Transverse colon (tissue), 4 donors: ENCODE measurements at regions of chr6 and their contacts with region 1.

Region 1: GRCh38 chr6:42260972-42261371 is 43.3 kb upstream of the MRPS10 start:
- DNase-seq: peak; percentile 28
- H3K4me3 ChIP-seq: no peak overlapping the region
- H3K27ac ChIP-seq: peak overlapping the region; percentile 28 to 57 (median 50)
- H3K4me1 ChIP-seq: peaks cover 0 to 18% (median 3%) of the 10 kb centered on the region in 4 donors
- H3K27me3 ChIP-seq: no peaks in the 10 kb centered on the region
- CTCF ChIP-seq: peak; percentile 37 to 58 (median 54)
- EP300 ChIP-seq: no peak
- POLR2A ChIP-seq: no peak

Region 2: DNA sequence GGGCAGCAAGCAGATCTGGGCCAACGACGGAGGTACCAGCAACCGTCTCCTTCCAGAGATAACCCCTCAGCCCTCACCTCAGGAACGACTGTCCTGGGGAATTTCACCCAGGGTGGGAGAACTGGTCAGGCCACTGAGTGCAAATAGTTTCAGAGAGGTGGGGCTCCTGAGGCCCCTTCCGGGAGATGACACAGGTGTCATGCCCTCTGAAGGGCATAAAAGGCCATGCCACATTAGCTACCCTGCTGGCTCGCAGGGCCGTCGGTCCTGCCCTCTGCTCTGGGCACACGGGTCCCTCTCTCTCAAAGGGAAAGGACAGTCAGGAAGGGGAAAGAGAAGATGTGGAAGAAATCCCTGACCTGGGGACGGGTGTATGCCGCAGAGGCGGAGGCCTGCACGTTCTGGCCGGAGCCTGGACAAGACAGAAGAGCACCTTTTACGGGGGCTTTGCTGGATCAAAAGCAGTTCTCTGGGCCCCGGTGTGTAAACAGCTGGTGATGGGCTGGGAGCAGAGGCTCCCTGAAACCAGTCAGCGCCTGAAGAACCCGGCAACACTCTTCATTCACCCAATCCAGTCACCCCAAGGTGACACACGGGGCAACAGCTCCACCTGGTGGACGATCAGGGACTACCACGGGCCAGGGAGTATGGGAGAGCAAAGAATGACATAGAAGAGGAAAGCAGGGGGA is 217.0 kb before region 1 on chr6:
- in situ Hi-C with region 1: no loop called
- intact Hi-C with region 1: no loop called
- DNase-seq: peak; percentile 92
- H3K4me3 ChIP-seq: peak overlapping the region in 1 of 4 donors; percentile 18
- H3K27ac ChIP-seq: peak overlapping the region; percentile 87 to 94 (median 92)
- H3K4me1 ChIP-seq: peaks cover 25 to 67% (median 60%) of the 10 kb centered on the region in 4 donors
- H3K27me3 ChIP-seq: no peaks in the 10 kb centered on the region
- CTCF ChIP-seq: peak; percentile 93 to 99 (median 97)
- EP300 ChIP-seq: no peak
- POLR2A ChIP-seq: no peak

Region 3: DNA sequence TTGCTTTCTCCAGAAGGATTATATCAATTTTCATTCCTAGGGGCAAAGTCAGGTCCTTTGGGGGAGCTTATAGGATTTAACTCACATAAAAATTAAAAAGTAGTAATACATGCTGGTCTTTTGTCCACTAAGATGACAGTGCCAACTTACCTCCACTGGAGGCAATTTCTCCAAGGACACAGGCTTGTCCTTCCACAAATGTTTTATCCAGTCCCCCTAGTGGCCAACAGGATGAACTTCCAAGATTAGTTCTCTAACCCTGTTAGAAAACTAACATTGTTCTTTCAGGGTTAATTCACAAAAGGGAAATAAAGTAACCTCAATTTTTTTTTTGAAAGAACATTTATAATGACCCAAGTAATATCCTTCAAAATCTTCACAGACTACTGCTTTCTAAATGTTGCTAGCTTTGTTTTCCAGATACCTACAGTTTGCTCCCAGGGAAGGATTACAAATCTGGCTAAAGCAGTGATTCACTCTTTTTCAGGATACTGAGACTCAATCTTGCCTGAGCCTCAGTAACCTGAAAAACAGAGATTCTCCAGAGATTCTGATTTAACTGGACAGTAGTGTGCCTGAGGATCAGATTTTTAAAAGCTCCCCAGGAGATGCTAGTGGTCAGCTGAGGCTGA is 271.2 kb after region 1 on chr6:
- in situ Hi-C with region 1: loop called (anchors 25 kb)
- intact Hi-C with region 1: loop called (anchors 5 kb)
- DNase-seq: no peak
- H3K4me3 ChIP-seq: no peak overlapping the region
- H3K27ac ChIP-seq: no peak overlapping the region
- H3K4me1 ChIP-seq: no peaks in the 10 kb centered on the region
- H3K27me3 ChIP-seq: no peaks in the 10 kb centered on the region
- CTCF ChIP-seq: peak; percentile 90 to 95 (median 91)
- EP300 ChIP-seq: no peak
- POLR2A ChIP-seq: no peak

Region 4: GRCh38 chr6:42547407-42548329 is 286.7 kb after region 1 on chr6:
- in situ Hi-C with region 1: loop called (anchors 25 kb)
- intact Hi-C with region 1: no loop called
- DNase-seq: peak; percentile 89
- H3K4me3 ChIP-seq: peak overlapping the region in 3 of 4 donors; percentile 21 to 55 (median 38)
- H3K27ac ChIP-seq: peak overlapping the region; percentile 60 to 75 (median 72)
- H3K4me1 ChIP-seq: peaks cover 0 to 12% (median 4%) of the 10 kb centered on the region in 4 donors
- H3K27me3 ChIP-seq: no peaks in the 10 kb centered on the region
- CTCF ChIP-seq: peak; percentile 95 to 99 (median 99)
- EP300 ChIP-seq: no peak
- POLR2A ChIP-seq: no peak